ENCODE measurements at regions of chr14 and their contacts with region 1.

Region 1: GRCh38 chr14:57692671-57693070 is 173.2 kb downstream of the SLC35F4 start:
- DNase-seq: peak; percentile 4
- H3K4me3 Mint-ChIP-seq: no peak overlapping the region
- H3K27ac Mint-ChIP-seq: no peak overlapping the region
- H3K4me1 Mint-ChIP-seq: no peaks in the 10 kb centered on the region
- H3K27me3 Mint-ChIP-seq: peaks cover 22% of the 10 kb centered on the region
- CTCF ChIP-seq: peak; percentile 48

Region 2: DNA sequence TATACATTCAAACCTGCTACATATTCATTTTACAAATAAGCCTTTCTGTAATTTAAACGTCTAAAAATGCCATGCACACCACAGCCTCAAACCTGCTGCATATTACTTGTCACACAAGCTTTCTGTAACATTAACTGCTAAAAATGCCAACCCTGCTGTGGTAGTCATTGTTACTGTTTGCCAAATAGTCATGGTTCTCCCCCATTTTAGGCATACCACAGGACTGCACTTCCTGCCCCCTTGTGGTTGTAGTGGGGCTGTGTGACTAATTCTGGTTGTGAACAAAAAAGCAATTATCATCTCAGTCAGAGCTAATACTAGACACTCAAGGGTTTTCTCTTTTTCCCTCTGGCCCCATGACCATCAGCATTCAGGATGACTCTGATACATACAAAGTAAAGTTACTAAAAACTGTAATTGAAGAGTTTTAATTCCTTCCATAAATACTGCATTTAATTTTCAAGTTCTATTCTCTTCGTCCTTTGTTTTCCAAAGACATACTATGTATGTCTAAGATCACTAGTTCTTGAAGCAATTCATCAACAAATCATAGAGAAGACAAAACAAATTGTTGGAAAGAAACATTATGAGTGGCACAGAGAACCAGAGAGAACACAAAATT is 178.9 kb after region 1 on chr14:
- CTCF ChIA-PET with region 1: interaction called, 5 read pairs
- intact Hi-C with region 1: loop called (anchors 1 kb)
- DNase-seq: peak; percentile 57
- H3K4me3 Mint-ChIP-seq: no peak overlapping the region
- H3K27ac Mint-ChIP-seq: no peak overlapping the region
- H3K4me1 Mint-ChIP-seq: peaks cover 9% of the 10 kb centered on the region
- H3K27me3 Mint-ChIP-seq: peaks cover 30% of the 10 kb centered on the region
- CTCF ChIP-seq: peak; percentile 59

Region 3: DNA sequence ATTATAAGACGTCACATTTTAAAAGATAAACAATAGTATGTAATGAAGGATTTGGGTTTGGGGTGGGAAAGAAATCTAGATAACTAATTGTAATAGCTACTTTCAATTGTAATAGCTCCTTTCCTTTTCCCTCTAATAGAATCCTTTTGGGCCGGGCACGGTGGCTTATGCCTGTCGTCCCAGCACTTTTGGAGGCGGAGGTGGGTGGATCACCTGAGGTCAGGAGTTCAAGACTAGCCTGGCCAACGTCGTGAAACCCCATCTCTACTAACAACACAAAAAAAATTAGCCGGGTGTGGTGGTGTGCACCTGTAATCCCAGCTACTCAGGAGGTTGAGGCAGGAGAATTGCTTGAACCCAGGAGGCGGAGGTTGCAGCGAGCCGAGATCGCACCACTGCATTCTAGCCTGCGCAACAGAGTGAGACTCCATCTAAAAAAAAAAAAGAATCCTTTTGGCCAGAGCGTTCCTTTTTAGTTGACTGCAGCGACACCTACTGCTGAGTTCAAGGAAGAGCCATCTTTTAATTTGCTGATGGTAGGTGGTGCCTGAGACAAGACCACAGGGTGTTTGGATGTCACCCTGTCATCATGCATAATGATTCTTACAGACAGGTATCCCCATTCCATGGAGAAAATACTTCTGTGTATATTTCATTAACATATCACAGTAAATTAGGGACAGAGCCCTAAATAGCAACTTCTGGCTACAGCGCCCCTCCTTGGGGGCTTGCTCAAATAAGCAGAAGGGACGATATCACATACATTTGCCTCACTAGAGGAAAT is 379.8 kb after region 1 on chr14:
- CTCF ChIA-PET with region 1: interaction called, 3 read pairs
- intact Hi-C with region 1: loop called (anchors 1 kb)
- DNase-seq: peak; percentile 63
- H3K4me3 Mint-ChIP-seq: no peak overlapping the region
- H3K27ac Mint-ChIP-seq: no peak overlapping the region
- H3K4me1 Mint-ChIP-seq: no peaks in the 10 kb centered on the region
- H3K27me3 Mint-ChIP-seq: peaks cover 24% of the 10 kb centered on the region
- CTCF ChIP-seq: peak; percentile 30